Mammary epithelial cell (primary cell): ENCODE measurements at regions of chr11 and their contacts with region 1.

Region 1: GRCh38 chr11:64996710-64997380 is at the start of gene BATF2:
- DNase-seq: peak; percentile 60
- H3K4me3 ChIP-seq: peak within 1 kb of the TSS in 1 of 3 experiments; percentile 3
- H3K27ac ChIP-seq: no peak within 1 kb of the TSS
- H3K4me1 ChIP-seq: no peaks in the 10 kb centered on the region
- H3K27me3 ChIP-seq: no peaks in the 10 kb centered on the region
- CTCF ChIP-seq: peak; percentile 21 to 56
- total RNA-seq, gene BATF2: 1.3 to 2.4 TPM

Region 2: DNA sequence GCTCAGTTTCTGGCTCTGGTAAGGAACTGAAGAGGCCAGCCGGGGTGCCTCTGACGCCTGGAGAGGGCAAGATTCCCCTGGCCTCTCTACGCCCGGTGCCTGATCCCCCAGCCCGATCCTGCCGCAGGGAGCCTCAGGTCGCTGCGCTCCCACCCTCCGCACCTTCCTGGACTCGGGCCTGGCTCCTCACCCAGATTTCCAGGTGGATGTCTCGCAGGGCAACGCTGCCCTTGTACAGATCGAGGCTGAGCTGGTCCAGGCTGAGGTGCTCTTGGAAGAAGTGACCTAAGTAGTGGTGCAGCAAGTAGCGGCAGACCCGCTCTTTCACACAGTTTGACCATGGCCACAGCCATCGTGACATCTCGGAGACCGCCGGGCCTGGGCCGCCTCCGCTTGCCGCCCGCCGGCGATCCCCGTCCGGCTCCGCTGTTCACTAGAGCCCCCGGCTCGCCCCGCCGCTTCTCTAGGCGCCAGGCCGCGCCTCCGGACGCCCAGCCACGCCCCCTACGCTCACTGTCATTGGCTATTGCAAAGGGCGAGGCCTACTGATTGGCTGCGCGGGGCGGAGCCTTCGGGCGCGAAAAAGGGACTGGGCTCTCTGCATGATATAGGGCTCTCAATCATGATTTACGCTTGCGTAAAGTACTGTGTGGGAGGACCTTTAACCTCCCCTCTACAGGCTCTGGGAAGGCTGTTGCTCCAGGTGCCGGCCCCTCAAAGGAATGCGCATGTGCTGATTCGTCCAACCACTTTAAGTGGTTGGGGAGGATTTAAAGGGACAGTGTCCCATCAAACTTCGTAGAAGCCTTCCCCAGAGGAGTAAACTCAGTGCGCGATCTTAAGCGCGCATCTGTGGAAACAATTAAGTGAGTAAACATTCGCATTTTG is 79.8 kb before region 1 on chr11 and contains the start of gene ATG2A:
- CTCF ChIA-PET with region 1: no interaction called
- dilution Hi-C with region 1: no loop called
- in situ Hi-C with region 1: no loop called
- intact Hi-C with region 1: loop called (anchors 2 kb)
- DNase-seq: peak; percentile 100
- H3K4me3 ChIP-seq: peak within 1 kb of the TSS; percentile 66 to 87 (median 71)
- H3K27ac ChIP-seq: peak within 1 kb of the TSS; percentile 70
- H3K4me1 ChIP-seq: peaks cover 9% of the 10 kb centered on the region
- H3K27me3 ChIP-seq: no peaks in the 10 kb centered on the region
- CTCF ChIP-seq: no peak
- total RNA-seq, gene ATG2A: 20.7 to 21.0 TPM

Region 3: GRCh38 chr11:64924102-64924851 is 72.6 kb before region 1 on chr11 and contains the start of gene PPP2R5B:
- CTCF ChIA-PET with region 1: no interaction called
- dilution Hi-C with region 1: no loop called
- in situ Hi-C with region 1: no loop called
- intact Hi-C with region 1: loop called (anchors 1 kb)
- DNase-seq: peak; percentile 88
- H3K4me3 ChIP-seq: peak within 1 kb of the TSS; percentile 77 to 88 (median 78)
- H3K27ac ChIP-seq: peak within 1 kb of the TSS; percentile 70
- H3K4me1 ChIP-seq: peaks cover 10% of the 10 kb centered on the region
- H3K27me3 ChIP-seq: no peaks in the 10 kb centered on the region
- CTCF ChIP-seq: no peak
- total RNA-seq, gene PPP2R5B: 13.8 to 32.7 TPM

Region 4: DNA sequence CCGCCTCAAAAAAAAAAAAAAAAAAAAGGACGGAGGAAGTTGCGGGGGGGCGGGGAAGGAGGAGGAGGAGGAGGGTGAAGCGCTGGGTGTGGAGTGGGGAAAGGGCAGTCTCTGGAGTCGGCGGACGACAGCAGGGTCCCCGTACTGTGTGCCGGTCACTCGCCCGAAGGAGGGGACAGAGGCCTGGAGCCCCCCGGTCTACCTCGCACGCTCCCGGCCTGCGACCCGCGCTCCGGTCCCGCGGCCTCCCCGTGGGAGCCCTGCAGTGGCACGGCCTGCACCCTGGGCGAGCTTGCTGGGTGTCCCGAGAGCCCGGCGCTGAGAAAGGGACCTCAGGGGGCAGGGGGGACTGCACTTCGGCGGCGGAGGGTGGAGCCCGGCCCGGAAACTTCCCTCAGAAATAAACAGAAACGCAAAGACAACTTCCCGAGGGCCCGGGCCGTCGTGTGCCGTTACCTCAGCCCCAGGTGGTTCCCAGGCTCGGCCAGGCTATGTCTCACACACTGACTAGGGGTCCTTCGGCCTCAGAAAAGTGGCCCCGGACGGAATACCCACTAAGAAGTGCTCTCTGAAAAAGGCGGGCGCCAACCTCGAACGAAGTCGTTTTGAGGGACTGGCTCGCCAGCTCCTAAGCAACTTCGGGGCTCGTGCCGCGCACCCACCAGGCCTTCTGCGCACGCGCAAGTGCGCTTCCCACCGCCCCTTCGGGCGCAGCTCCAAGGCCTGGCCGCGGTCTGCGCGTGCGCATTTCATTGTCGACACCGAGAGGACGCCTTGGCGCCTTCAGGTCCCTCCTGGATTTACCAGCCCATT is 25.2 kb before region 1 on chr11 and contains the start of gene MAJIN:
- CTCF ChIA-PET with region 1: no interaction called
- dilution Hi-C with region 1: no loop called
- in situ Hi-C with region 1: no loop called
- intact Hi-C with region 1: loop called (anchors 2 kb)
- DNase-seq: no peak
- H3K4me3 ChIP-seq: no peak within 1 kb of the TSS
- H3K27ac ChIP-seq: peak within 1 kb of the TSS; percentile 36
- H3K4me1 ChIP-seq: peaks cover 20% of the 10 kb centered on the region
- H3K27me3 ChIP-seq: no peaks in the 10 kb centered on the region
- CTCF ChIP-seq: no peak
- total RNA-seq, gene MAJIN: not detected

Region 5: DNA sequence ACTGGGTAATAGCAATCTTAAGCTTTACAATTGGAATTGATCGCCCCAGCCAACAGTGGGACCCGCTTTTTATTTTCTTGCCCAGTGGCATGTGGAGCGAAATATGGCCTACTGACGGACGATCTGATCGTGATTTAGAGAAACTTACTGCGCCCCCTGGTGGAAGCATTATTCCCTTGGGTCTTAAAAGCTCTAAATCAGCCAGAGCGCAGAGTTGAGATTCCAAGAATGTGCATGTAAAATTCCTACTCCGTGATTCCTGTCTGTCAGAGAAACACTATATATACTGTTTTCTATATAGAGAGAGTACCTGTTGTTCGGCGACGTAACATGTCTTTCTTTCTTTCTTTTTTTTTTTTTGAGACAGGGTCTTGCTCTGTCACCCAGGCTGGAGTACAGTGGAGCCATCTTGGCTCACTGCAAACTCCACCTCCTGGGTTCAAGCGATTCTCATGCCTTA is 333.1 kb after region 1 on chr11:
- CTCF ChIA-PET with region 1: no interaction called
- dilution Hi-C with region 1: no loop called
- in situ Hi-C with region 1: no loop called
- intact Hi-C with region 1: no loop called
- DNase-seq: peak; percentile 64
- H3K4me3 ChIP-seq: no peak overlapping the region
- H3K27ac ChIP-seq: peak overlapping the region; percentile 24
- H3K4me1 ChIP-seq: peaks cover 11% of the 10 kb centered on the region
- H3K27me3 ChIP-seq: no peaks in the 10 kb centered on the region
- CTCF ChIP-seq: peak; percentile 70 to 79